Activated B cell treated with CpG ODN at 0.5 μM for 24 hours (primary cell): ENCODE measurements at regions of chr12 and their contacts with region 1.

Region 1: DNA sequence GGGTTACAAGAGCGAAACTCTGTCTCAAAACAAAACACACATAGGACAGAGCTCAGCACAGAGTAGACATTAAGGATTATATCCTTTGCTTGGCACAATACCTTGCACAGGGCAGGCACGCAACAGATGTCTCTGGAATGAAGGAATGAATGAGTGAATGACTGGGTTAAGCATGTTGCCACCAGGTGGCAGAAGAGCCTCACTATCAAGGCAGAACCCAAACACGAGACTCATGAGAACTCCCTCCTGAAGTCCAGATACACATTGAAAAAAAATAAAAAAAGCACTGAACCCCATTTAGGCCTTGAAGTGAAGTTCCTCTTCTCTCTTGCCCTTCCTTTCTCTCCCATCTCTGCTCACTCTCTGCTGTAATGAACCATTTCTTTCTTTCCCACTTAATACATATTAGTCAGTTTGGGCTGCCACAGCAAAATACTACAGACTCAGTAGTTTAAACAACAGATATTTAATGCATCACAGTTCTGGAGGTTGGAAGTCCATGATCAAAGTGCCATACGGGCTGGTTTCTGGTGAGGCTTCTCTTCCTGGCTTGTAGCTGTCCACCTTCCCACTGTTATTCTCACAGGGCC is 26.6 kb upstream of the LTA4H start:
- DNase-seq: peak; percentile 37
- ATAC-seq: peak; percentile 92
- H3K4me3 Mint-ChIP-seq: no peak overlapping the region
- H3K27ac Mint-ChIP-seq: peak overlapping the region; percentile 71
- H3K4me1 Mint-ChIP-seq: peaks cover 31% of the 10 kb centered on the region
- H3K27me3 Mint-ChIP-seq: no peaks in the 10 kb centered on the region
- CTCF ChIP-seq: no peak

Region 2: DNA sequence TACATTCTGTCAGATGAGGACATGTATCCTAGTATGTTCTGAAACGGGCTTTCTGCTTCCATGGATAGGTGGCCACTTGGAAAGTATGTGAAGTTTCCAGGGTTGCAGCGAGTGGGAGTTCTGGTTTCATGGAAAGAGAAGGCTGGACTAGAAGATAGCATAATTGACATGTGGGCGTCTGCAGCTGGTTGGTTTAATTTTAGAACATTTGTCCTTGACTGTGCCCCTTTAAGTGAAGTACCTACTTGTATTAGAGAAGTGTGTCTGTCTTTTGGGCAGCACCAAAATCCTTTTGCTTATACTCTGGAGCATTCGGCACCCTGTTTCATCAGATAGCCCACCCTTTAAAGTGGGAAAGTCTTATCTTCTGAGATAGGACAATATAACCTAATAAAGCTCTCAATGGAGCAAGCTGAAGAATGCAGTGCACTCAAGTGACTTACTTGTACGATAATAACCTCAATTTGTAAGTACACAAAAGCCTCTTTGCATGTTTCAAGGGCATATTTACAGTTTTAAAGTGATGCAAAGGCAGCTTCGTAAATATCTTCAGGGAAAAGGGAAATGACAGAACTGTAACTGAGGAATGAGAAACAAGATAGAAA is 306.6 kb before region 1 on chr12:
- CTCF ChIA-PET with region 1: no interaction called
- POLR2A ChIA-PET with region 1: no interaction called
- intact Hi-C with region 1: no loop called
- DNase-seq: no peak
- ATAC-seq: no peak
- H3K4me3 Mint-ChIP-seq: no peak overlapping the region
- H3K27ac Mint-ChIP-seq: no peak overlapping the region
- H3K4me1 Mint-ChIP-seq: no peaks in the 10 kb centered on the region
- H3K27me3 Mint-ChIP-seq: peaks cover 3% of the 10 kb centered on the region
- CTCF ChIP-seq: no peak

Region 3: DNA sequence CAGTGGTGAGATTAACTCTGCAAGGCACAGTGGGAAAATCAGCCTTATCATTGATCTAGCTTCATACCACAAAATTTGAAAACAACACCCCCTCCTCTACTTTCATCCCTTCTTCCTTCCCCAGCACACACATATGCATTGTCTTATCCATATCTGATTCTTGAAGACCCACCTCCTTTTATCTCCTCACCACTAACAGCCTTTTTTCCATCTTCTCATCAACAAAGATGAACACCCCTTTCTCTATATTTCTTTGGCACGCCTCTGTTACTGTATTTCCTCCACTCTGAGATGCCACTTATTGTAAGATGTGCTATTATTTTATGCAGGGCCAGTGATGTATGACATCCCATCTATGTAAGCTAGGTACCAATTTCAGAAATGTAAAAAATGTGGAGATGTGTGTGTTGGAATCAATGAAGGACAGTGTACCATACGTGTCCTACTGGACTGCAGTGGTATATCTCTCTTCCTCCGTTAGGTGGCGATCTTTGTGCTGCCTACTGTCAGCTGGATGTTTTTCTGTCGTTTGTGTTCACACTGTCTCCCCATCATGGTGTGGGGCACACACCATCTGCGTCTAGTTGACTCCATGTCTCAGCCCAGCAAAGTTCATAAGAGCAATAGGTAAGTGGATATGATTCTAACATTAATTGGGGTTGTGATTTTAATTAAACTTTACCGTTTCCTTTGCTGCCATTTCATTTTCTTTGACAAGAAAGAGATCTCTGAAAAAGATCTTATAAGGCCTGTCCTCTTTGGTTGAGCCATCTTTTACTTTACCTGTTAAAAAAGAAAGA is 143.6 kb before region 1 on chr12:
- CTCF ChIA-PET with region 1: interaction called, 3 read pairs
- POLR2A ChIA-PET with region 1: no interaction called
- intact Hi-C with region 1: loop called (anchors 2 kb)
- DNase-seq: no peak
- ATAC-seq: peak; percentile 82
- H3K4me3 Mint-ChIP-seq: no peak overlapping the region
- H3K27ac Mint-ChIP-seq: no peak overlapping the region
- H3K4me1 Mint-ChIP-seq: no peaks in the 10 kb centered on the region
- H3K27me3 Mint-ChIP-seq: peaks cover 6% of the 10 kb centered on the region
- CTCF ChIP-seq: peak; percentile 43

Region 4: GRCh38 chr12:96132819-96133218 is 70.9 kb after region 1 on chr12:
- CTCF ChIA-PET with region 1: no interaction called
- POLR2A ChIA-PET with region 1: no interaction called
- intact Hi-C with region 1: loop called (anchors 2 kb)
- DNase-seq: no peak
- ATAC-seq: no peak
- H3K4me3 Mint-ChIP-seq: no peak overlapping the region
- H3K27ac Mint-ChIP-seq: no peak overlapping the region
- H3K4me1 Mint-ChIP-seq: peaks cover 18% of the 10 kb centered on the region
- H3K27me3 Mint-ChIP-seq: no peaks in the 10 kb centered on the region
- CTCF ChIP-seq: no peak

Region 5: GRCh38 chr12:96208801-96209549 is 147.0 kb after region 1 on chr12:
- CTCF ChIA-PET with region 1: interaction called, 90 read pairs
- POLR2A ChIA-PET with region 1: interaction called, 3 read pairs
- intact Hi-C with region 1: no loop called
- DNase-seq: peak; percentile 54
- ATAC-seq: peak; percentile 81
- H3K4me3 Mint-ChIP-seq: peak overlapping the region; percentile 64
- H3K27ac Mint-ChIP-seq: peak overlapping the region; percentile 82
- H3K4me1 Mint-ChIP-seq: peaks cover 99% of the 10 kb centered on the region
- H3K27me3 Mint-ChIP-seq: no peaks in the 10 kb centered on the region
- CTCF ChIP-seq: no peak